T-cell (primary cell): ENCODE measurements at regions of chr18 and their contacts with region 1.

Region 1: GRCh38 chr18:62200121-62200914 is 13.3 kb downstream of the RELCH start:
- DNase-seq: no peak
- ATAC-seq: peak in 1 of 4 experiments; percentile 34
- H3K4me3 ChIP-seq: no peak overlapping the region
- H3K4me3 Mint-ChIP-seq: no peak overlapping the region
- H3K27ac ChIP-seq: no peak overlapping the region
- H3K27ac Mint-ChIP-seq: no peak overlapping the region
- H3K4me1 ChIP-seq: peaks cover 5% of the 10 kb centered on the region in 2 experiments
- H3K4me1 Mint-ChIP-seq: peaks cover 56 to 63% (median 62%) of the 10 kb centered on the region in 3 donors
- H3K27me3 ChIP-seq: no peaks in the 10 kb centered on the region
- H3K27me3 Mint-ChIP-seq: no peaks in the 10 kb centered on the region

Region 2: GRCh38 chr18:62186774-62187542 is 13.4 kb before region 1 on chr18 and contains the starts of genes PIGN and RELCH:
- CTCF ChIA-PET with region 1: interaction called, 3 to 6 read pairs
- POLR2A ChIA-PET with region 1: interaction called in 1 of 2 experiments, 10 read pairs
- DNase-seq: peak; percentile 82 to 98 (median 96)
- ATAC-seq: peak; percentile 91 to 95 (median 94)
- H3K4me3 ChIP-seq: peak within 1 kb of the TSS; percentile 95 to 99
- H3K4me3 Mint-ChIP-seq: peak within 1 kb of the TSS; percentile 99
- H3K27ac ChIP-seq: peak within 1 kb of the TSS; percentile 69
- H3K27ac Mint-ChIP-seq: peak within 1 kb of the TSS; percentile 94 to 96
- H3K4me1 ChIP-seq: peaks cover 23 to 27% of the 10 kb centered on the region in 2 experiments
- H3K4me1 Mint-ChIP-seq: peaks cover 63 to 64% (median 64%) of the 10 kb centered on the region in 3 donors
- H3K27me3 ChIP-seq: no peaks in the 10 kb centered on the region
- H3K27me3 Mint-ChIP-seq: no peaks in the 10 kb centered on the region
- total RNA-seq, gene PIGN: 19.5 to 24.0 (median 21.8) TPM
- total RNA-seq, gene RELCH: 46.5 to 68.1 (median 51.5) TPM